AG04449 (cell line): ENCODE measurements at regions of chr13 and their contacts with region 1.

Region 1: DNA sequence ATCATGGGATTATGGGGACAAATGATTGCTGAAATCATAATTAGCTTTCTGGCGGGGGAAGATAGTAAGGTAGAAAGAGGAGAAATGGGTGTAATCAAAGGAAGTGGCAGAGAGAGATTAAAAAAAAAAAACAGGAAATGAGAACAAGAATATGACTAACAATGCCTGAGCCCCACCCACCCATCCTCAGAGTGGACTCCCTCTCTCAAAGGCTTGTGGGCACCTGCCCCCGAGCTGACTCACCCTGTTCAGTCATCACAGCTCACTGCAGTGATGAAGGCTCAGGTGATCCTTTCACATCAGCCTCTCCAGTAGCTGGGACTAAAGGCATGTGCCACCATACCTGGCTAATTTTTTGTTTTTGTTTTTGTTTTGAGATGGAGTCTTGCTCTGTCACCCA is 26.4 kb upstream of the TPT1 start:
- DNase-seq: peak; percentile 31
- H3K4me3 ChIP-seq: no peak overlapping the region
- CTCF ChIP-seq: no peak

Region 2: GRCh38 chr13:45340926-45341750 is 26.2 kb before region 1 on chr13 and contains the start of gene TPT1:
- CTCF ChIA-PET with region 1: interaction called, 30 read pairs
- POLR2A ChIA-PET with region 1: no interaction called
- DNase-seq: peak; percentile 87
- H3K4me3 ChIP-seq: peak within 1 kb of the TSS; percentile 85
- CTCF ChIP-seq: no peak

Region 3: GRCh38 chr13:45356966-45357672 is 10.2 kb before region 1 on chr13:
- CTCF ChIA-PET with region 1: interaction called, 58 read pairs
- POLR2A ChIA-PET with region 1: interaction called, 3 read pairs
- DNase-seq: no peak
- H3K4me3 ChIP-seq: no peak overlapping the region
- CTCF ChIP-seq: no peak

Region 4: GRCh38 chr13:45385907-45386553 is 18.7 kb after region 1 on chr13:
- CTCF ChIA-PET with region 1: interaction called, 135 read pairs
- POLR2A ChIA-PET with region 1: no interaction called
- DNase-seq: no peak
- H3K4me3 ChIP-seq: no peak overlapping the region
- CTCF ChIP-seq: no peak

Region 5: GRCh38 chr13:45393941-45394570 is 26.7 kb after region 1 on chr13:
- CTCF ChIA-PET with region 1: interaction called, 135 read pairs
- POLR2A ChIA-PET with region 1: no interaction called
- DNase-seq: no peak
- H3K4me3 ChIP-seq: no peak overlapping the region
- CTCF ChIP-seq: peak; percentile 76

Region 6: GRCh38 chr13:45511310-45512097 is 144.1 kb after region 1 on chr13:
- CTCF ChIA-PET with region 1: interaction called, 12 read pairs
- POLR2A ChIA-PET with region 1: no interaction called
- DNase-seq: no peak
- H3K4me3 ChIP-seq: no peak overlapping the region
- CTCF ChIP-seq: peak; percentile 60